Heart left ventricle (tissue), 16 donors: ENCODE measurements at regions of chr5 and their contacts with region 1.

Region 1: DNA sequence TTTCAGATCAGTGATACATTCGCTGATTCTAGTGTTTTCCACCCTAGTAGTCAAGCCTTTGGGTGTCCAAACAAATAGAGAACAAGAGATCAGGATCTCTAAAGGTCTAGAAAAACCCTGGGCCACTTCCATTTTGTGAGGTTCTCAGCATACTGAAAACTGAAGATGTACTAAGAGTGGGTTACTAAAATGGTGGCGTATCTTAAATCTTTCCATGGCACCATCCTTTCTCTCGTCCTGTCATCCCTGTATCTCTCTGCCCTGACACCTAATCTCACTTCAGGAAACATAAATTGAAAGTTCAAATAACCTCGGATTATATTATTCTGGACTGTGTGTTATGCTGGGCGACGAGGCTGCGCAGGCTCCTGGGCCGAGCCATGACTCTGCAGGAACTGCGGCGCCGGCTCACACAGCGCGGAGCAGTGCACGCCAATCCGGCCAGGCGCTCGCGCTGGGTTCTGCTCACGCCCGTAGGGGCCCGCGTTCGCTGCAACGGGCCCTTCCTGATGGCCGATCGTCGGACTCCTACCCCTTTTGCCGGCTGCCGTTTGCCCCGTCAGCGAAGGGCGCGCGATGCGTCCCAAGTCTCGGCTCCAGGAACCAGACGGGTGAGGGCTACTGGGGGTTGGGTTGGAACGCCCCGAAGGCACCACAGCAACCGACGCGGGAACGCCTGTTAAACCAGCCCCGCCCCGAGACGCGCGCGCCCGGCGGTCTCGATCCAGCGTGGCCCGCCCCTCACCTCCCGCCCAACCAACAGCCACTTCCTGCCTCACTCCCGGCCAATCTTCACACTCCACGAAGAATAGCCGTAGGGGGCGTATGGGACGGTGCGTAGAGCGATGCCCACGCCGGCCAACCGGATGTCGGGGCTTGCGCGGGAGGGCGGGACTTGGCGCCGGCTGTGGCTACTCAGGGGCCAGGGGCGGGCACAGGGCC is 503 bp upstream of the CANX start:
- DNase-seq: peak; percentile 99
- ATAC-seq: peak; percentile 95 to 98 (median 98)
- H3K4me3 ChIP-seq: peak overlapping the region; percentile 61 to 98 (median 90)
- H3K27ac ChIP-seq: peak overlapping the region; percentile 64 to 98 (median 97)
- H3K4me1 ChIP-seq: peaks cover 0 to 51% (median 25%) of the 10 kb centered on the region in 12 donors
- H3K27me3 ChIP-seq: no peaks in the 10 kb centered on the region
- CTCF ChIP-seq: peak in 5 of 12 donors; percentile 12 to 33 (median 15)
- POLR2A ChIP-seq: peak in 1 of 2 donors; percentile 89

Region 2: GRCh38 chr5:179623003-179623880 is 75.0 kb before region 1 on chr5 and contains the start of gene HNRNPH1:
- intact Hi-C with region 1: loop called in 1 of 10 experiments (anchors 2 kb)
- DNase-seq: peak; percentile 98 to 99 (median 98)
- ATAC-seq: peak; percentile 87 to 93 (median 90)
- H3K4me3 ChIP-seq: peak within 1 kb of the TSS; percentile 66 to 100 (median 96)
- H3K27ac ChIP-seq: peak within 1 kb of the TSS; percentile 97 to 100 (median 100)
- H3K4me1 ChIP-seq: peaks cover 17 to 54% (median 46%) of the 10 kb centered on the region in 12 donors
- H3K27me3 ChIP-seq: no peaks in the 10 kb centered on the region
- CTCF ChIP-seq: peak in 4 of 12 donors; percentile 1 to 11 (median 4)
- POLR2A ChIP-seq: peak; percentile 78 to 99
- total RNA-seq, gene HNRNPH1: 106 to 252 (median 178) TPM

Region 3: DNA sequence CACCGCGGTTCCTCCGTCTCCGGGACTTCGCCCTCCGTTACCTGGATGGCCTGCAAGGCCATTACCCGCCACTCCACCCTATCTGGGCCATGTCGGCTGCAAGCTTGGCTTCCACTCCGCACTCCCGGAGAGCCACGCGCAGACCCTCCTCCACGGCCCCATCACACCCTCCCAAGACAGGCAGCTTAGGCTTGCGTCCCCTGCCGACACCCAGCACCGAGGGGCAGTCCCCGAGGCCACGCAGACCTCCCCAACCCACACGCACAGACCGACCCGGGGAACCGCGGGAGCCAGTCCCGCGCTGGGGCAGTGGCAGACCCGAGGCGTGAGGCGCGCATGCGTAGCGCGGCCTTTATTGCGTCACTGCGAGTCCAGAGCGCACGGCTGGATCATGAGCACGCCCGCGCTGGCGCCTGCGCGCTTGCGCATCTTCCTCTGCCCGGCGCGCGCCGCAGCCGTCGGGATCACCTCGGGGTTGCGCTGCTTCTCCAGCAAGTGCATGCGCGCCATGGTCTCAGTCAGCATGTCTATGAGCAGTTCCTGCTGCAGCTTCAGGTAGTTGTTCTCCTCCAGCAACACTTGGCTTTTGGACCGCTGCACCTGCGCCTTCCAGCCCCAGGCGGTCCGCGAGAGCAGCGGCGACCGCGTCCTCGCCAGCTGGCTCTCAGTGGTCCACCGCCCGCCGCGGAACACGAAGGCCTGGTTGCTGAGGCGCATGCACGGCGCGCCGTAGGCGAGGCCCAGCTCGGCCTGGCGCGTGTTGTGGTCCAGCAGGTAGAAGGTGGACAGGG is 19.8 kb before region 1 on chr5:
- intact Hi-C with region 1: loop called in 3 of 10 experiments (anchors 1 to 2 kb)
- DNase-seq: peak; percentile 96 to 99 (median 96)
- ATAC-seq: peak; percentile 96 to 99 (median 98)
- H3K4me3 ChIP-seq: peak overlapping the region; percentile 22 to 92 (median 84)
- H3K27ac ChIP-seq: peak overlapping the region; percentile 69 to 95 (median 85)
- H3K4me1 ChIP-seq: peaks cover 4 to 24% (median 18%) of the 10 kb centered on the region in 12 donors
- H3K27me3 ChIP-seq: no peaks in the 10 kb centered on the region
- CTCF ChIP-seq: peak in 1 of 12 donors; percentile 22
- POLR2A ChIP-seq: peak in 1 of 2 donors; percentile 87